ENCODE measurements at regions of chr7 and their contacts with region 1.

Region 1: DNA sequence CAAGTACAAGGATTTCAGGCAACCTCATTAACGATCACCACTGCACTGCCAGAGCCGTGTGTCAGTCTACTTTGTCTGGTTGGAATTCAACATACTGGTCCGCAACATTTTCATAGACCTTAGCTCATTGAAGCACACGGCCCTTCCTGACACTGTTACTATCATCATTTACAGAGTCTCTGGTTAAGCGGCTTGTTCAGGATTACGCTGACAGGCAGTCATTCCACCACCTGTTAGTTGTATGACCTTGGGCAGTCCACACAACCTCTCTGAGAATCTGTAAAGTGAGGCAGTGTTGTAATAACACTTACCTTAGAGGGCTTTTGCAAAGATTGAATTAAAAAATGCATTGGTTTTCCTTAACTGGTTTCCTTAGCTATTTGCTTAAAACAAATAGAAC is 112.6 kb downstream of the AOAH start:
- DNase-seq: no peak
- H3K4me3 Mint-ChIP-seq: no peak overlapping the region
- H3K27ac Mint-ChIP-seq: no peak overlapping the region
- H3K4me1 Mint-ChIP-seq: peaks cover 9% of the 10 kb centered on the region
- H3K27me3 Mint-ChIP-seq: no peaks in the 10 kb centered on the region

Region 2: DNA sequence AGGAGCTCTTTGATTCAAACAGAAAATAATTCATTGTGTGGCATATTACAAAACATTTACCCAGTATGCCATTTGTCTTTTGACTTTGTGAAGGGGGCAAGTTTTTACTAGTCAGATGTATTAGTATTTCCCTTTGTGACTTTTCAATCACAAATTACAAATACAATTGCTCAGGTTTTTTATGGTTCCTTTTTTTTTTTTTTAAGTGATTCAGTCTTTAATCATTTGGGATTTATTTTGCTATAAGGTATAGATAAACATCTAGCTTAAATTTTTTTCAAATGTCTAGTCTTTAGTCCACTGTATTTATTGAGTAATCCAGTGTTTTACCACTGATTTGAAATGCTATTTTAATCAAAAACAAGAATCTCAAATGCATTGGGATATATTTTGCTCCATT is 36.7 kb after region 1 on chr7:
- intact Hi-C with region 1: loop called (anchors 1 kb)
- DNase-seq: no peak
- H3K4me3 Mint-ChIP-seq: no peak overlapping the region
- H3K27ac Mint-ChIP-seq: no peak overlapping the region
- H3K4me1 Mint-ChIP-seq: peaks cover 27% of the 10 kb centered on the region
- H3K27me3 Mint-ChIP-seq: no peaks in the 10 kb centered on the region

Region 3: GRCh38 chr7:37916673-37917660 is 1305.3 kb after region 1 on chr7 and contains the start of gene SFRP4:
- intact Hi-C with region 1: no loop called
- DNase-seq: no peak
- H3K4me3 Mint-ChIP-seq: peak within 1 kb of the TSS; percentile 6
- H3K27ac Mint-ChIP-seq: no peak within 1 kb of the TSS
- H3K4me1 Mint-ChIP-seq: peaks cover 12% of the 10 kb centered on the region
- H3K27me3 Mint-ChIP-seq: peaks cover 75% of the 10 kb centered on the region
- total RNA-seq, gene SFRP4: not detected in 2 replicates

Measured in activated T-helper 2 cell treated with anti-CD3 and anti-CD28 coated beads, Interferon-gamma antibody, Interleukin-2, Interleukin-4, amounts not matched to agents 10 μg/mL and 5 μg/mL and 100 μg/mL, durations not matched to agents 14 hours and 24 hours and 36 hours (primary cell).